ENCODE measurements at regions of chr20 and their contacts with region 1.

Region 1: DNA sequence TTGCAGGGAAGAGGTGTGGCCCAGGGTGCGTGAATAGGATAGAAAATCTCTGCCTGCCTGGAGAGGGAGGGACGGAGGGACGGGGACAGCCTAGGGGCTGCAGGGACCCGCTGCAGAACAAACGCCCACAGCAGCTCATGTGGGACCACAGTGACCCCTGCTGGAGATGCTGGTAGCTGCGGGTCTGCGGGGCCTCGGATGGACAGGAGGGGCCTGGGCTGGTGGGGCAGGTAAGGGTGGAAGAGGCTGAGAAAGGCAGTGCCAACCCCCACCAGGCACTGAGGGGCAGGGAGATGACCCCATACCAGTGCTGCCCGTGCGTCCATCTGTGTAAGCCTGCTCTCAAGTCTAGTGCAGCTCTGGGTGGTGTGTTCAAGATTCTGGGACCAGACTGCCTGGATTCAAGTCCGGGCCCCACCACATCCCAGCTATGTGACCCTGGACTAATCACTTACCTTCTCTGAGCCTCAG is 39.4 kb downstream of the KIAA1755 start:
- DNase-seq: peak; percentile 53 to 84 (median 73)
- ATAC-seq: peak; percentile 47 to 75 (median 63)
- H3K4me3 ChIP-seq: no peak overlapping the region
- H3K27ac ChIP-seq: no peak overlapping the region
- H3K4me1 ChIP-seq: peaks cover 0 to 16% (median 7%) of the 10 kb centered on the region in 12 donors
- H3K27me3 ChIP-seq: no peaks in the 10 kb centered on the region
- CTCF ChIP-seq: peak; percentile 85 to 95 (median 90)
- POLR2A ChIP-seq: no peak

Region 2: DNA sequence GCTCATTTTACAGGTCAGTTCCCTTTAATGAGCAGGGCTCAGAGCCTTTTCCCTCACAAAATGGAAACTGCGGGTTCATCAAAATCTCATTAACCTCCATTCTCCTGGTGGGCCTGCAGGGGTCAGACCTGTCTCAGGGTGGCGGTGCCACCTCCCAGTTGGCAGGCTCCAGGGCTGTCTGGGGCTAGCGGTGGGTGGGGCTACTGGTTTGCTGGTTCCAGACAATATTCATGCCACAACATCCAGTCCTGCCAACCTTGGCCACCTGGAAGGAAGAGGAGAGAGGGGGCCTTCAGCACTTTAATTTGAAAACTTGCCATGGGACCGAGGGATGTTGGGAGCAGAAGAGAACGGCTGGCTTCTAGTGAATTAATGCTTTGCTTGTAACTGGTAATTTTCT is 569.2 kb before region 1 on chr20:
- intact Hi-C with region 1: loop called in 2 of 10 experiments (anchors 5 to 10 kb)
- DNase-seq: peak in 4 of 5 donors; percentile 37 to 58 (median 50)
- ATAC-seq: peak; percentile 73 to 88 (median 83)
- H3K4me3 ChIP-seq: no peak overlapping the region
- H3K27ac ChIP-seq: no peak overlapping the region
- H3K4me1 ChIP-seq: peaks cover 0 to 13% (median 0%) of the 10 kb centered on the region in 12 donors
- H3K27me3 ChIP-seq: no peaks in the 10 kb centered on the region
- CTCF ChIP-seq: peak; percentile 25 to 58 (median 42)
- POLR2A ChIP-seq: no peak

Region 3: DNA sequence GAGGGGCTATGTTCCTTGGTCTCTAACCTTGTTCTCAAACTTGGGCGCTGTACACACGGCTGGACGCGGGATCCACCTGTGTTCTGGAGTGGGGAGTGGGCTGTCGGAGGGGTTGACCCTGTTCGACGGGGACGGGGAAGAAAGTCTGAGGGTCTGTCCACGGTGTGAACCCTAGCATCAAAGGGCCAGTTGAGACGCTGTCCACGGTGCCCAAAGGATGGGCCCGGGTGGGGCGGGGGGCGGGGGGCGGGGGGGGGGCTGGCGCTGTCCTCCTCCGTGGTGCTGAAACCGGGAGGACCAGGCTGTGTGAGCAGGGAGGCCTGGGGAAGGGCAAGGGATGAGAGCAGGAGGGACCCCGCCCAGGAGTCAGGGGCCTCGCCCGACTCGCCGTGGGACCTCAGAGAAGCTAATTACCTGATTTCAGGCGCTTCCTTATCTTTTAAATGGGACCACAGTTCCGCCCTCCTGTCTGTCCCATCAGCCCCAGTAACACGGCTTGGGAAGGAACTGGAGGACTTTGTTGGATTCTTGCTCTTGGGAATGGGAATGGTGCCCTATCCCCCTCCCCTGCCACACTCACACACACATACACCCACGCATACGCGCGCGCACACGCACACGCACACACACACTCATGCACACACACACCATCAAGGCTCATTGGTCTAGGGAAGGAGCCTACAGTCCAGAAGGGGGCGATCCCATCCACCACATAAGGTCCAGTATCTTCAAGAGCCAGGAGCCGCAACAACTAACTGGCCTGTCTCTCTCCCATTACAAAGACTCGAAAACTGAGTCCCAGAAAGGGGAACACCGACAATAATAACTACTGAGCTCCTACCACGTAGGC is 319.3 kb before region 1 on chr20:
- intact Hi-C with region 1: loop called in 2 of 10 experiments (anchors 10 kb)
- DNase-seq: peak in 1 of 5 donors; percentile 49
- ATAC-seq: peak; percentile 43 to 78 (median 64)
- H3K4me3 ChIP-seq: peak overlapping the region in 8 of 12 donors; percentile 41 to 54 (median 48)
- H3K27ac ChIP-seq: no peak overlapping the region
- H3K4me1 ChIP-seq: peaks cover 0 to 21% (median 10%) of the 10 kb centered on the region in 12 donors
- H3K27me3 ChIP-seq: peaks cover 17 to 65% (median 30%) of the 10 kb centered on the region in 9 donors
- CTCF ChIP-seq: peak in 11 of 12 donors; percentile 10 to 49 (median 31)
- POLR2A ChIP-seq: no peak

Region 4: GRCh38 chr20:38165089-38165989 is 55.8 kb before region 1 on chr20 and contains the start of gene TGM2:
- intact Hi-C with region 1: loop called in 9 of 10 experiments (anchors 2 to 5 kb)
- DNase-seq: peak; percentile 84 to 92 (median 91)
- ATAC-seq: peak; percentile 82 to 90 (median 86)
- H3K4me3 ChIP-seq: peak within 1 kb of the TSS; percentile 49 to 81 (median 70)
- H3K27ac ChIP-seq: peak within 1 kb of the TSS; percentile 76 to 96 (median 86)
- H3K4me1 ChIP-seq: peaks cover 0 to 85% (median 50%) of the 10 kb centered on the region in 12 donors
- H3K27me3 ChIP-seq: no peaks in the 10 kb centered on the region
- CTCF ChIP-seq: peak; percentile 79 to 94 (median 89)
- POLR2A ChIP-seq: peak; percentile 63 to 90
- total RNA-seq, gene TGM2: 271 to 1,146 (median 567) TPM

Region 5: DNA sequence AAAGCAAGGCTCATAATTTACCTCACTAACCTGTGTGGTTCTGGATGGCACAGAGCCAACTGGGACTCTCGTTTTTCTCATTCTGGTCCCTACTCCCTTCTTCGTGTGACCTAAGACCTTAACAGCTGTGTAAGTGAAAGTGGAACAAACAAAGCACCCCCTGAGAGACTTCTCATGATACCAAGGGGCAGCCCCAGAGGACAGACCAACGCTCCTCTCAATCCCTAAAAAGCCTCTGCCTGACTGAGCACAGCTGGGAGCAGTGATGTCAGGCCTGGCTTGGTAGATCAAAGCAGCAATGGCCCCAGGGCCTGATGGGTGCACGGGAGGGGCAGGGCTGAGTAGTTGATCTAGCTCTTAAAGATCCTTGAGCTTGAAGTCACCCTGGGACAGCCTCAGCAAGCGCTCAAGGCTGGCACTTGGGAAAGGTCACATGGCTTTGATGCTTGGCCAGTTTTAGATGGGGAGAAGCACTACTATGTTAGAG is 39.9 kb before region 1 on chr20:
- intact Hi-C with region 1: no loop called
- DNase-seq: no peak
- ATAC-seq: peak in 1 of 4 donors; percentile 34
- H3K4me3 ChIP-seq: no peak overlapping the region
- H3K27ac ChIP-seq: no peak overlapping the region
- H3K4me1 ChIP-seq: no peaks in the 10 kb centered on the region
- H3K27me3 ChIP-seq: no peaks in the 10 kb centered on the region
- CTCF ChIP-seq: no peak
- POLR2A ChIP-seq: no peak

Region 6: GRCh38 chr20:38406476-38406875 is 185.3 kb after region 1 on chr20:
- intact Hi-C with region 1: loop called in 7 of 10 experiments (anchors 5 to 10 kb)
- DNase-seq: no peak
- ATAC-seq: no peak
- H3K4me3 ChIP-seq: no peak overlapping the region
- H3K27ac ChIP-seq: no peak overlapping the region
- H3K4me1 ChIP-seq: peaks cover 0 to 2% (median 0%) of the 10 kb centered on the region in 12 donors
- H3K27me3 ChIP-seq: no peaks in the 10 kb centered on the region
- CTCF ChIP-seq: no peak
- POLR2A ChIP-seq: no peak